ENCODE measurements at regions of chr17 and their contacts with region 1.

Region 1: DNA sequence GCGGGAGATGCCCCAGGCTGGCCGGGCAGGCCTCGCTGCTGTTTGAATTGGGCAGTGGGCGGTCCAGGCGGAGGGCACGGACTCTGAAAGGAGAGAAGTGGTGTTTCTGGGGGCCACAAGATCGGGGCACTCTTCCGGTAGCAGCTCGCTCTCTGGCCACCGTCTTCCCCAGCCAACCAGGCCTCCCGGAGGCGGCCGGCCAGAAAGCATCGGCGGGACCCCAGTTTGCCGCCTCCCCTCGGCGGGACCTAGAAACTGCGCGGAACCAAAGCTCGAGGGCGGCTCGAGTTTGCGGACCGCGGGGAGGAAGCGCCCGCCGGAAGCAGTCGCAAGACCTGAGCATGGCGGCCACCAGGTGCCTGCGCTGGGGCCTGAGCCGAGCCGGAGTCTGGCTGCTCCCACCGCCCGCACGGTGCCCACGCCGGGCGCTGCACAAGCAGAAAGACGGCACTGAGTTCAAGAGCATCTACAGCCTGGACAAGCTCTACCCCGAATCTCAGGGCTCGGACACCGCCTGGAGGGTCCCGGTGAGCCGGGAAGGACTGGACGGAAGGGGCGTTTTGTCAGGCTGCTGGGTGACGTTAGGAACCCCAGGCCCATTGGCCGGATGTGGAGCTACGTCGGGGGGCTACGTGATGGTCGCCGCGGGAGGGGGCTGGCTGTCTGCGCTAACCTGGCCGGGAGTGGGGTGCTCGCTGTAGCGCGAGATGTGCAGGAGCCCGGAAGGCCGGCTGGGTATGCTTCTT is at the start of gene MRPL58:
- DNase-seq: no peak
- H3K4me3 ChIP-seq: peak within 1 kb of the TSS; percentile 69
- H3K27me3 ChIP-seq: no peaks in the 10 kb centered on the region
- CTCF ChIP-seq: peak; percentile 72
- polyA plus RNA-seq, gene MRPL58: 44.2 and 50.8 TPM in 2 replicates

Region 2: GRCh38 chr17:74981979-74982662 is 30.4 kb before region 1 on chr17:
- CTCF ChIA-PET with region 1: interaction called, 5 read pairs
- POLR2A ChIA-PET with region 1: interaction called, 10 read pairs
- DNase-seq: no peak
- H3K4me3 ChIP-seq: peak overlapping the region; percentile 61
- H3K27me3 ChIP-seq: peaks cover 1% of the 10 kb centered on the region; the same call in 1 of the 2 replicates
- CTCF ChIP-seq: no peak

Region 3: GRCh38 chr17:74998783-74999182 is 13.7 kb before region 1 on chr17:
- CTCF ChIA-PET with region 1: interaction called, 23 read pairs
- POLR2A ChIA-PET with region 1: no interaction called
- DNase-seq: no peak
- H3K4me3 ChIP-seq: no peak overlapping the region
- H3K27me3 ChIP-seq: no peaks in the 10 kb centered on the region
- CTCF ChIP-seq: no peak